Common myeloid progenitor, CD34-positive (primary cell): ENCODE measurements at regions of chr3 and their contacts with region 1.

Region 1: DNA sequence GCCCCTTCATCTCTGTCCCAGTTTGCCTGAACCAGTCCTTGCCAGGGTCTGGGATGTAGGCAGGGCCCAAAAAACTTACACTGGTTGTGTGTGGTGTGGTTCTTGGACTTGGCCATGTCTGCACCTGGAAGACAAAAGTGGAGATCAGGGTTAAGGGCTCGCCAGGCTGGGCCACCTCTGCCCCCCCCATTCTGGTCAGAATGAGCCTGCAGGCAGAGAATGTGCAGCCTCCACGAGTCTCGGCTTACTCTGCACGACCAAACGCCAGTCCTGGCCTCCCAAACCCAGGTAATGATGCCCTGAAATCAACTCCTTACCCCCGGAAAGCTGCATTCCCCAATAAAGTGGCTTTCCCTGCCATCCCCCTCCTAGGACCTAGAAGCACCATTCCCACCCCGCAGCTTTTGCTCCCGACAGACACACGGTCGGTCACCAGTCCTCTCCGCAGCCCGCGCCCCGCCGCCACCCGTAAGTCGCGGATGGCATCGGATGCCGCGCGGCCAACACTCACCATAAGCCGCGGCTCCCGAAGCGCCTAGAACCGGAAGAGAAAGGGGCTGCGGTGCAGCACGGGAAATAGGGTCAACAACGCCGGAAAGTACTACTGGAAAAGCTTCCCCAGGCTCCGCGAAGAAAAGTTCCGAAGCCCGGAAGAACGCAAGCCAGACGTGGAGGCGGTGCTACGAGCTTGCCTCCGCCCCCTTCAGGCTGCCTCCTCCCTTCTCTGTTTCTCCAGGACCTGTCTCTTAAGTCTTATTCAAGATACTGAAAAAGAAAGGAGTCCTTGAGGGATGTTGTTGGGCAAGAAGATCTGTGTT is at the start of gene RPL29:
- DNase-seq: peak; percentile 96 to 98 (median 97)
- H3K4me3 ChIP-seq: peak within 1 kb of the TSS; percentile 64 to 100 (median 95)
- H3K27ac ChIP-seq: peak within 1 kb of the TSS; percentile 95 to 98
- H3K4me1 ChIP-seq: peaks cover 6 to 32% (median 15%) of the 10 kb centered on the region in 4 experiments
- H3K27me3 ChIP-seq: no peaks in the 10 kb centered on the region

Region 2: DNA sequence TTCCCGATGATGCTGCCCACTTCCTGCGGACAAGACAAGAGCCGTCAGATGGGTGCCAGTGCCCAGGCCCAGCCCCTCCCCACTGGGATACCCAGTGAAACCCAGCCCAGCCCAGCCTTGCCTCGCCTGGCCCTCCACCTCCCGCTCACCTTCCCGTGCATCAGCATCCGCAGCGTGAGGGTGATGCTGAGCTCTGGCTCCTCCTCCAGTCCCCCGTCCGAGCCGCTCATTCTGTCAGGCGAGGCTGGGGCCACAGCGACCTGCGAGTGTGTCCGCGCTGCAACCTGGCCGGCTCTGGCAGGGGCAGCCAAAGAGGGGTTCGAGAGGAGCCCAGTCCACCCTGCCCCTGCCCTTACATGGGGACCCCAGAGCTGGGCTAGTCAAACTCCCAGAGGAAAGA is 34.5 kb before region 1 on chr3:
- CTCF ChIA-PET with region 1: no interaction called
- POLR2A ChIA-PET with region 1: no interaction called
- DNase-seq: no peak
- H3K4me3 ChIP-seq: no peak overlapping the region
- H3K27ac ChIP-seq: no peak overlapping the region
- H3K4me1 ChIP-seq: peaks cover 0 to 16% (median 14%) of the 10 kb centered on the region in 4 experiments
- H3K27me3 ChIP-seq: peaks cover 0 to 27% (median 10%) of the 10 kb centered on the region in 5 experiments

Region 3: GRCh38 chr3:51982782-51983577 is 12.6 kb before region 1 on chr3 and contains the start of gene ACY1:
- CTCF ChIA-PET with region 1: interaction called, 52 read pairs
- POLR2A ChIA-PET with region 1: interaction called, 5 read pairs
- DNase-seq: peak; percentile 70 to 86 (median 80)
- H3K4me3 ChIP-seq: peak within 1 kb of the TSS; percentile 59 to 82 (median 71)
- H3K27ac ChIP-seq: peak within 1 kb of the TSS; percentile 54 to 79
- H3K4me1 ChIP-seq: peaks cover 4 to 27% (median 23%) of the 10 kb centered on the region in 4 experiments
- H3K27me3 ChIP-seq: no peaks in the 10 kb centered on the region